PC-9 (cell line): ENCODE measurements at regions of chr18 and their contacts with region 1.

Region 1: DNA sequence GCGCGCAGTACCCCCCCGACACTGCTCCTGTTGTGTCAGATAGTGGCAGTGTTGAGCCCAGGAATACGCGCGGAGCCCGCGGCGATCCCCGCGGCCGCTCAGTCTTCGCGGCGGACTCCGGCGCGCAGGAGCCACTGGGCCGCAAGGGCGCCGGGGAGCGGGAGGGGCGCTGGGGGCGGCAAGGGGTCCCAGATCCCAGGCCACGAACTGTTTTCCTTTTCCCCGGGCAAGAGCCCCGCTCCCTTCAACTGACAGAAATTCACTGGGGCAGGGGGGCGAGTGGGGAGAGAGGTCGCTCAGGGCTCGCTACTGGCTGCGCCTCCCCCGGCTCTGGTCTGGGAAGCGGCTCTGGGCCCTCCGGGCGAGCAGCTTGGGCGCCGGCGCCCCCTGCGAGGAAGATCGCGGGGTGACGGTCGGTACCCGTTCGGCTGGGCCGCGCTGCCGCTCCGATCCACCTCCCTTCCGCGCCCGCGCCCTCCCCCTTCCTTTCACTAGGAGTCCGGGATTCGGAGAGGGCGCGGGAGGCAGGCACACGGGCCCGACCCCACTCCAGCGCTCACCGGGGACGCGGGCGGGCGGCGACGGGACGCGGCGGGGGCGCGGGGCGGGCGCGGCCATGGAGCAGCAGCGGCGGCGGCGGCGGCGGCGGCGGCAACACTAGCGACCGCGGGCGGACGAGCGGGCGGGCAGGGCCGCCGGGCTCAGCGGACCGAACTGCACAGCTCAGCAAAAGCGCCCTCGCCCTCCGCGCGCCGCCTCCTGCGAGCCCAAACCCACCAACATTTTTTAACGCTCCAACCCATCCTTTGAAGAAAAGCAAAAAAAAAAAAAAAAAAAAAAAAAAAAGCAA is 1.4 kb upstream of the SETBP1 start:
- DNase-seq: peak; percentile 65 to 73
- H3K4me3 ChIP-seq: peak overlapping the region; percentile 91
- H3K27ac ChIP-seq: peak overlapping the region; percentile 71
- H3K4me1 ChIP-seq: peaks cover 11% of the 10 kb centered on the region
- H3K27me3 ChIP-seq: no peaks in the 10 kb centered on the region
- CTCF ChIP-seq: peak; percentile 68; the same call in 1 of the 2 replicates

Region 2: GRCh38 chr18:44130376-44130942 is 548.8 kb before region 1 on chr18:
- CTCF ChIA-PET with region 1: no interaction called
- POLR2A ChIA-PET with region 1: no interaction called
- intact Hi-C with region 1: loop called (anchors 10 kb)
- DNase-seq: no peak
- H3K4me3 ChIP-seq: no peak overlapping the region
- H3K27ac ChIP-seq: no peak overlapping the region
- H3K4me1 ChIP-seq: no peaks in the 10 kb centered on the region
- H3K27me3 ChIP-seq: no peaks in the 10 kb centered on the region
- CTCF ChIP-seq: peak; percentile 84

Region 3: DNA sequence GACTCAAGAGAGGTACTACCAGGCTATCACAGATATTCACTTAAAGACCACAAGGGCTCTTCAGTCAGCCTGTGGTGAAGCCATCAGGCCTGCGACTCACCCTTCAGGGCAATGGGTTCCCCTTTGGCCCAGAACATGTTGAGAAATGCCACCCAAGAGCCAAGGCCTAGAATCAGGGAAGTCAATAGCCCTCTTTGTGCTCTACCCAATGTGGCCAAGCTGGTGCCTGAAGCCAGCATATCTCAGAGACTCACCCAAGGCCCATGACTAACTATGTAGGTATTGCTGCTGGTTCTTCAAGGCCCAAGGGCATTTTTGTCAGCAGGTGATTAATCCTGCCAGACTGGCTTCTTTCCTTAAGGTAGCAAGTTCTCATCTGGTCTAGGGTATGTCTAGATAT is 337.5 kb before region 1 on chr18:
- CTCF ChIA-PET with region 1: no interaction called
- POLR2A ChIA-PET with region 1: no interaction called
- intact Hi-C with region 1: loop called (anchors 5 kb)
- DNase-seq: peak; percentile 67 to 97
- H3K4me3 ChIP-seq: peak overlapping the region; percentile 19; the same call in 1 of the 2 replicates
- H3K27ac ChIP-seq: peak overlapping the region; percentile 85
- H3K4me1 ChIP-seq: peaks cover 40% of the 10 kb centered on the region
- H3K27me3 ChIP-seq: no peaks in the 10 kb centered on the region
- CTCF ChIP-seq: no peak

Region 4: GRCh38 chr18:44495151-44495550 is 184.1 kb before region 1 on chr18:
- CTCF ChIA-PET with region 1: no interaction called
- POLR2A ChIA-PET with region 1: no interaction called
- intact Hi-C with region 1: no loop called
- DNase-seq: no peak
- H3K4me3 ChIP-seq: no peak overlapping the region
- H3K27ac ChIP-seq: no peak overlapping the region
- H3K4me1 ChIP-seq: no peaks in the 10 kb centered on the region
- H3K27me3 ChIP-seq: no peaks in the 10 kb centered on the region
- CTCF ChIP-seq: no peak

Region 5: GRCh38 chr18:44637210-44638051 is 41.9 kb before region 1 on chr18:
- CTCF ChIA-PET with region 1: no interaction called
- POLR2A ChIA-PET with region 1: no interaction called
- intact Hi-C with region 1: loop called (anchors 2 kb)
- DNase-seq: peak; percentile 29 to 90
- H3K4me3 ChIP-seq: peak overlapping the region; percentile 39; the same call in 1 of the 2 replicates
- H3K27ac ChIP-seq: peak overlapping the region; percentile 88
- H3K4me1 ChIP-seq: peaks cover 38% of the 10 kb centered on the region
- H3K27me3 ChIP-seq: no peaks in the 10 kb centered on the region
- CTCF ChIP-seq: no peak

Region 6: DNA sequence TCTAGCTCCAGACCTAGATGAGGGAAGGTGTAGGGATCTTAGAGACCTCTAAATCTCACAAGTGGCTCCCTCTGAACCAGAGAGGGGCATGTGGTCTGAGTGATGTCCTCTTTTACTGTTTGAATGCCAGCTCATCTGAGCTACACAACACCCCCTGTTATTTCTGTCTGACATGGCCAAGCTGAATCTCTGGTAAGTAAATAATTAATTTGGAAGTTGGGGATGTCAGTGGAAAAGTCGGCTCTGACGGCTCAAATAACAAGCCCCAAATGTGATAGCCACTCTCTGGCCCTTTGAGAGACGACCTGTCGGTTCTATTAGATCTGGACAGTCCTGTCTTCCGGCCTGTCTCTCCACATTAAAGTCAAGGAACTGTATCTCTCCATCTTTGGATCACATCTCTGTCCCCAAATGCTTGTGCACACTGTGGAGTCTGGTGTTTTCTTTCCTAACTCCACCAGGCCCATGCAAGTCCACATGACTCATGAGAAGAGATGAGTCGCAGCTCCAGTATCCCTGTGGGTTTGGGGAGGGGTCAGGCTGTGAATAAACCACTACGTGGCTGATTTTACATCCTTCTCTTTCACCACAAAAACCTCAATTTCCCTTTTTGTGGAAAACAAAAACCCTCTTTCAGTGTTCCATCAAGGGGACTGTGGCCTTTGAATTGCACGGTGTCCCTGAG is 53.9 kb after region 1 on chr18:
- CTCF ChIA-PET with region 1: interaction called, 3 read pairs
- POLR2A ChIA-PET with region 1: no interaction called
- intact Hi-C with region 1: loop called (anchors 5 kb)
- DNase-seq: peak in 1 of 2 experiments; percentile 76
- H3K4me3 ChIP-seq: no peak overlapping the region
- H3K27ac ChIP-seq: peak overlapping the region; percentile 80
- H3K4me1 ChIP-seq: peaks cover 84% of the 10 kb centered on the region
- H3K27me3 ChIP-seq: no peaks in the 10 kb centered on the region
- CTCF ChIP-seq: no peak

Region 7: GRCh38 chr18:44895176-44895798 is 216.0 kb after region 1 on chr18:
- CTCF ChIA-PET with region 1: no interaction called
- POLR2A ChIA-PET with region 1: no interaction called
- intact Hi-C with region 1: loop called (anchors 1 kb)
- DNase-seq: peak; percentile 30 to 45
- H3K4me3 ChIP-seq: no peak overlapping the region
- H3K27ac ChIP-seq: no peak overlapping the region
- H3K4me1 ChIP-seq: peaks cover 8% of the 10 kb centered on the region; the same call in 1 of the 2 replicates
- H3K27me3 ChIP-seq: no peaks in the 10 kb centered on the region
- CTCF ChIP-seq: peak; percentile 70

Region 8: DNA sequence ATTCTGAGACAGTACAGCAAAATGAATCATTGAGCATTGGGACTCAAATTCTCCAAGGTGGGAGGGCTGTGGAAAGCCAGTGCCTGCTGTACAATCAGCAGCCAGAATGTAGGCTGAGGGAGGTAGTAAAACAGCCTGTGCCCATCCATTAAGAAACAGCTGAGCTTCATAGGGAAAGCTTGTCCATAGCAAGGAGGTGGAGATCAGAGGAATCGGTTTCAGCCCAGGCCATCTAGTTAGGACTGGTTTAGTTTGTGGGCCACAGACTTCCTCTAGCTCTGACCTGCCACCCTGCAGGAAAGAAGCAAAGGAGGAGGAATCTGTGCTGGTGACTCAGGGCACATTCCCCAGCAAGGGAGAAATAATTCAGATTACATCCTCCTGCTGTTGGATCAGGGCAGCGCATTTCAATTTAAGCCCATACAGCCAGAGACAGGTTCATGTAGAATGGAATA is 334.8 kb after region 1 on chr18:
- CTCF ChIA-PET with region 1: no interaction called
- POLR2A ChIA-PET with region 1: no interaction called
- intact Hi-C with region 1: loop called (anchors 10 kb)
- DNase-seq: peak; percentile 41 to 65
- H3K4me3 ChIP-seq: no peak overlapping the region
- H3K27ac ChIP-seq: no peak overlapping the region
- H3K4me1 ChIP-seq: no peaks in the 10 kb centered on the region
- H3K27me3 ChIP-seq: no peaks in the 10 kb centered on the region
- CTCF ChIP-seq: peak; percentile 62